ENCODE measurements at regions of chr1 and their contacts with region 1.

Region 1: GRCh38 chr1:15788624-15789301 is 18.7 kb downstream of the UQCRHL start:
- DNase-seq: peak in 1 of 2 donors; percentile 75
- H3K4me3 ChIP-seq: no peak overlapping the region
- H3K27ac ChIP-seq: peak overlapping the region; percentile 62 to 80
- H3K4me1 ChIP-seq: peaks cover 0 to 41% of the 10 kb centered on the region in 2 donors
- H3K27me3 ChIP-seq: no peaks in the 10 kb centered on the region
- CTCF ChIP-seq: no peak

Region 2: GRCh38 chr1:15983275-15983674 is 194.5 kb after region 1 on chr1:
- intact Hi-C with region 1: no loop called
- DNase-seq: no peak
- H3K4me3 ChIP-seq: no peak overlapping the region
- H3K27ac ChIP-seq: no peak overlapping the region
- H3K4me1 ChIP-seq: no peaks in the 10 kb centered on the region
- H3K27me3 ChIP-seq: no peaks in the 10 kb centered on the region
- CTCF ChIP-seq: no peak

Region 3: DNA sequence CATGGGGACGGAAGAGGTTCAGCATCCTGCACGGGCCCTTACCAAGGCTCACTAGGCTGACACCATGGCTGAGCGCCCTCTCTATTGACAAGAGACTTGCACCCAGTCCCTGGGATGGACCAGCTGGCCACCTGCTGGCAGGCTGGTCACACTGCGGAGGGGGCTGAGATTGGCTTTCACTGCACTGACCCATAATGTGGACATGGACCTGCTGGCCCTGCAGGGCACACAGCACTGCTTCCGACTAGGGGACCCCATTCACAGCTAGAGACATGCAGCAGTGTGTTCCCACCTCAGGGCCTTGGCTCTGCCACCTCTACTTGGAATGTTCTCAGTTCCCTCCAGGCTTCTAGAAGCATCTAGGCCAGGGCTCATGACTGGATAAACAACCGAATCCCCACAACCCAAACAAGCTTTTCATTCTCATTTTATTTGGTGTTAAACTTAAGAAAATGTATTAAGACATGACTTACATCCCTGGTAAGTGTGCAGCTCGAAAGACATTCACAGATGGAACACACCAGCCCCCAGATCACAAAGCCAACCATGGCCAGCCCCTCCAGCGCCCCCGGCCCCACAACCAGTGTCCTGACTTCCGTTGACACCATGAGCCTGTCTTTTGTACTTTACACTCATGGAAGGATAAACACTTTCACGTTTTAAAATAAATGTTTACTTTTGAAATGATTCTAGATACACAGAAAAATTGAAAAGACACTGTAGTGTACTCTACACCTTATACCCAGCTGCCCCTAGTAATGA is 206.0 kb after region 1 on chr1:
- intact Hi-C with region 1: loop called (anchors 1 kb)
- DNase-seq: peak in 1 of 2 donors; percentile 75
- H3K4me3 ChIP-seq: no peak overlapping the region
- H3K27ac ChIP-seq: no peak overlapping the region
- H3K4me1 ChIP-seq: no peaks in the 10 kb centered on the region
- H3K27me3 ChIP-seq: no peaks in the 10 kb centered on the region
- CTCF ChIP-seq: peak; percentile 78 to 93 (median 91)

Measured in ascending aorta (tissue), 2 donors.